ENCODE measurements at regions of chr2 and their contacts with region 1.

Region 1: GRCh38 chr2:149017116-149017985 is 21.1 kb upstream of the LYPD6B start:
- DNase-seq: peak in 4 of 5 donors; percentile 65 to 71 (median 70)
- ATAC-seq: peak in 3 of 4 donors; percentile 58 to 71 (median 65)
- H3K4me3 ChIP-seq: no peak overlapping the region
- H3K27ac ChIP-seq: no peak overlapping the region
- H3K4me1 ChIP-seq: peaks cover 0 to 6% (median 0%) of the 10 kb centered on the region in 12 donors
- H3K27me3 ChIP-seq: peaks cover 0 to 5% (median 0%) of the 10 kb centered on the region in 9 donors
- CTCF ChIP-seq: peak; percentile 75 to 91 (median 86)
- POLR2A ChIP-seq: no peak

Region 2: DNA sequence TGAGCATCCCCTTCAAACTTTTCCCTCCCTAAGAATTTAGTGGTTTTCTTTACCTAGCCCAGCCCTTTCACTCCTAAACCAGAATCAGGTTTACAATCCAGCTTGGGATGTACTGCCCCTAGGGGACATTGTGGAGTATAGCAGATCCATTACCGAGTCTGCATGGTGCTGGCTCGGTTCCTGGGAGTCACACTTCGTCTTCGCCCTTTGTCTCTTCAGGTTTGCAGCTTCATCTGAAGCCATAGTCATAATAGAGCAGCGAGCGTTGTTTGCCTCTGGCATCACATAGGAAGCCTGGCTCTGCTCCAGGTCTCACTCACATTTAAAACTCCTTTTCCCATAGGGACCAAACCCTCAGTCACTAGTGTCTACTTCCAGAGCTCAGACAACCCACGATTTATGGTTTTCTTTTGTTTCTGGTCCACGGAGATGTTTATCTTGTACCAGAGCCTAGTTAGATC is 296.2 kb after region 1 on chr2:
- intact Hi-C with region 1: loop called in 3 of 10 experiments (anchors 5 to 10 kb)
- DNase-seq: no peak
- ATAC-seq: peak in 1 of 4 donors; percentile 58
- H3K4me3 ChIP-seq: no peak overlapping the region
- H3K27ac ChIP-seq: no peak overlapping the region
- H3K4me1 ChIP-seq: no peaks in the 10 kb centered on the region
- H3K27me3 ChIP-seq: peaks cover 0 to 20% (median 0%) of the 10 kb centered on the region in 9 donors
- CTCF ChIP-seq: peak; percentile 45 to 65 (median 54)
- POLR2A ChIP-seq: no peak